ENCODE measurements at regions of chr15 and their contacts with region 1.

Region 1: GRCh38 chr15:69475769-69476358 is 23.2 kb downstream of the RPLP1 start:
- DNase-seq: peak; percentile 84
- H3K4me3 ChIP-seq: no peak overlapping the region
- H3K27ac ChIP-seq: no peak overlapping the region
- H3K4me1 ChIP-seq: no peaks in the 10 kb centered on the region
- H3K27me3 ChIP-seq: no peaks in the 10 kb centered on the region
- CTCF ChIP-seq: peak; percentile 89

Region 2: GRCh38 chr15:69200832-69201745 is 274.8 kb before region 1 on chr15:
- CTCF ChIA-PET with region 1: no interaction called
- POLR2A ChIA-PET with region 1: no interaction called
- intact Hi-C with region 1: no loop called
- DNase-seq: no peak
- H3K4me3 ChIP-seq: no peak overlapping the region
- H3K27ac ChIP-seq: no peak overlapping the region
- H3K4me1 ChIP-seq: no peaks in the 10 kb centered on the region
- H3K27me3 ChIP-seq: no peaks in the 10 kb centered on the region
- CTCF ChIP-seq: no peak

Region 3: GRCh38 chr15:69451951-69452691 is 23.7 kb before region 1 on chr15:
- CTCF ChIA-PET with region 1: interaction called, 13 read pairs
- POLR2A ChIA-PET with region 1: interaction called, 3 read pairs
- intact Hi-C with region 1: no loop called
- DNase-seq: peak; percentile 54
- H3K4me3 ChIP-seq: peak overlapping the region; percentile 83
- H3K27ac ChIP-seq: peak overlapping the region; percentile 84
- H3K4me1 ChIP-seq: peaks cover 22% of the 10 kb centered on the region
- H3K27me3 ChIP-seq: no peaks in the 10 kb centered on the region
- CTCF ChIP-seq: no peak

Region 4: GRCh38 chr15:69729161-69729748 is 253.4 kb after region 1 on chr15:
- CTCF ChIA-PET with region 1: no interaction called
- POLR2A ChIA-PET with region 1: no interaction called
- intact Hi-C with region 1: loop called (anchors 5 kb)
- DNase-seq: peak; percentile 51
- H3K4me3 ChIP-seq: no peak overlapping the region
- H3K27ac ChIP-seq: no peak overlapping the region
- H3K4me1 ChIP-seq: peaks cover 6% of the 10 kb centered on the region
- H3K27me3 ChIP-seq: no peaks in the 10 kb centered on the region
- CTCF ChIP-seq: peak; percentile 91

Region 5: DNA sequence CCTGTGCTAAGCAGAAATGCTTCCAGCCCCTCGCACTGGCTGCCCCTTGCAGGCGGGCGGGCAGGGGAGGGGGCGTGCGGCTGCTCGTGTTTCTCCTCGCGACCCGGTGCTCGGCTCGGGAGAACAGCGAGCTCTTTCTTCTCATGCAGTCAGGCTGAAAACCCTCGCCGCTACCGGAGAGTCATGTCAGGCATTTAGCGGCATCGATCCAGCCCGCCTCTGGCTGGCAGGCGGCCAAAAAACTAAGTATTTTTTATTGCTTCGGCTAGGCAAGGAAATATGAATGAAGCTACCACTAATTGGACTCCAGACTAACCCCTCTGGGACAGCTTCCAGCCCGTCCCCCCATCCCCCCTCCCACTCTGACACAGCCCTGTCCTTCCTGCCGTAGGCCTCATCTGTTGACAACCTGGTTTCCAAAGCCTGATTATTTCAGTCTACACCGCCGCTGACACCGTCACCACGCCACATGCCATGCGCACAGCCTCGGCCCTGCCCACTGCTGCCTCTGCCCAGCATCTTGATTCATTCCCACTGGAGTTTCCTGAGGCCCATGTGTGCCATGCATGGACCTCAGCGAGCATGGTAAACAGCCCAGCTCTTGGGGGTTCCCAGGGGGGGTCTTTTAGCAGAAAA is 586.6 kb after region 1 on chr15:
- CTCF ChIA-PET with region 1: no interaction called
- POLR2A ChIA-PET with region 1: no interaction called
- intact Hi-C with region 1: loop called (anchors 10 kb)
- DNase-seq: peak; percentile 94
- H3K4me3 ChIP-seq: peak overlapping the region; percentile 33
- H3K27ac ChIP-seq: peak overlapping the region; percentile 60
- H3K4me1 ChIP-seq: peaks cover 37% of the 10 kb centered on the region
- H3K27me3 ChIP-seq: no peaks in the 10 kb centered on the region
- CTCF ChIP-seq: no peak

Region 6: GRCh38 chr15:70466895-70467529 is 991.1 kb after region 1 on chr15:
- CTCF ChIA-PET with region 1: interaction called, 12 read pairs
- POLR2A ChIA-PET with region 1: no interaction called
- intact Hi-C with region 1: loop called (anchors 5 kb)
- DNase-seq: peak; percentile 73
- H3K4me3 ChIP-seq: no peak overlapping the region
- H3K27ac ChIP-seq: no peak overlapping the region
- H3K4me1 ChIP-seq: no peaks in the 10 kb centered on the region
- H3K27me3 ChIP-seq: no peaks in the 10 kb centered on the region
- CTCF ChIP-seq: peak; percentile 81

Region 7: GRCh38 chr15:70488002-70488605 is 1012.2 kb after region 1 on chr15:
- CTCF ChIA-PET with region 1: no interaction called
- POLR2A ChIA-PET with region 1: no interaction called
- intact Hi-C with region 1: loop called (anchors 5 kb)
- DNase-seq: peak; percentile 78
- H3K4me3 ChIP-seq: no peak overlapping the region
- H3K27ac ChIP-seq: no peak overlapping the region
- H3K4me1 ChIP-seq: no peaks in the 10 kb centered on the region
- H3K27me3 ChIP-seq: no peaks in the 10 kb centered on the region
- CTCF ChIP-seq: peak; percentile 93

Measured in A673 (cell line).